ENCODE measurements at regions of chr14 and their contacts with region 1.

Region 1: GRCh38 chr14:63543000-63543825 is at the start of gene PPP2R5E:
- DNase-seq: peak; percentile 95 to 99
- H3K4me3 ChIP-seq: peak within 1 kb of the TSS; percentile 92
- H3K27ac ChIP-seq: peak within 1 kb of the TSS; percentile 87 to 91
- H3K4me1 ChIP-seq: peaks cover 0 to 16% of the 10 kb centered on the region in 2 donors
- H3K27me3 ChIP-seq: no peaks in the 10 kb centered on the region
- CTCF ChIP-seq: no peak
- total RNA-seq, gene PPP2R5E: 5.7 TPM

Region 2: GRCh38 chr14:63388763-63389431 is 154.3 kb before region 1 on chr14:
- intact Hi-C with region 1: loop called (anchors 1 kb)
- DNase-seq: no peak
- H3K4me3 ChIP-seq: no peak overlapping the region
- H3K27ac ChIP-seq: no peak overlapping the region
- H3K4me1 ChIP-seq: no peaks in the 10 kb centered on the region
- H3K27me3 ChIP-seq: no peaks in the 10 kb centered on the region
- CTCF ChIP-seq: peak; percentile 53 to 82 (median 79)

Region 3: DNA sequence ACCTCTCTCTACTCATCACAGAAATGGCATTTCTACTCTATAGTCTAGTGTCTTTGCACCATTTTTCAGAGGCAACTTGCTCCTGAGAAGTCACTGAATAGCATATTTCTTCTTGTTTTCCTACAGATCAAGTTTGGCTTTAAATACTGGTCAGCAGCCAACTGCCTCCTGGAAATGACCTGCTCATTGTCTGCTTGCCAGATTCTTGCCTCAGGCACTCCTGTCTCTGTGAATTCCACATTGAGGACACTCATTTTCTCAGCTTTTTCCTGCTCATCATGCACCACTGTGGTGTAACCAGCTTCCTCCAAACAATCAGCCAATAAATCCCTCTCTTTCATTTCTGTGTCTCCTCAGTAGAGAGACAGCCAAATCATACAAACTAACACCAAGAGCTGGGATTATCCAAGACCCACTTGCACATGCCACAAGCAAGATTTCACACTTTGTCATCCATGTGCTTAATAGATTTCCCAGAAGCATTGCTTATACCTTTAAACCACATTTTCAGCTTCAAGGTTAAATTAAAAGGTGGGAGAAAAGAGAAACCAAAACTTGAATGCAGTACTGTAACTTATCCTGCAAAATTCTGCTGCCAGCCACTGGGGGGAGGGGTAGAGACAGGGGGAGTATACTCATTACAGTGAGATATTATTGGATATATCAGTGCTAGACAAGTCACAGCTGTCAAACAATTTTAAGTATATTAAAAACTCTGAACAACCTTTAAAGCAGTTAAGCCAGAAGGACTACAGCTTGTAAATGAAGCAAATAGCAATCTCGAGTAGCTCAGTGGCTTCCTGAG is 105.1 kb before region 1 on chr14:
- intact Hi-C with region 1: loop called (anchors 2 kb)
- DNase-seq: peak in 1 of 2 donors; percentile 86
- H3K4me3 ChIP-seq: peak overlapping the region; percentile 20 to 27
- H3K27ac ChIP-seq: peak overlapping the region; percentile 51 to 67
- H3K4me1 ChIP-seq: peaks cover 9 to 41% of the 10 kb centered on the region in 2 donors
- H3K27me3 ChIP-seq: no peaks in the 10 kb centered on the region
- CTCF ChIP-seq: peak in 1 of 3 experiments; percentile 29

Region 4: GRCh38 chr14:63692310-63693020 is 149.3 kb after region 1 on chr14:
- intact Hi-C with region 1: no loop called
- DNase-seq: no peak
- H3K4me3 ChIP-seq: no peak overlapping the region
- H3K27ac ChIP-seq: no peak overlapping the region
- H3K4me1 ChIP-seq: no peaks in the 10 kb centered on the region
- H3K27me3 ChIP-seq: no peaks in the 10 kb centered on the region
- CTCF ChIP-seq: no peak

Region 5: DNA sequence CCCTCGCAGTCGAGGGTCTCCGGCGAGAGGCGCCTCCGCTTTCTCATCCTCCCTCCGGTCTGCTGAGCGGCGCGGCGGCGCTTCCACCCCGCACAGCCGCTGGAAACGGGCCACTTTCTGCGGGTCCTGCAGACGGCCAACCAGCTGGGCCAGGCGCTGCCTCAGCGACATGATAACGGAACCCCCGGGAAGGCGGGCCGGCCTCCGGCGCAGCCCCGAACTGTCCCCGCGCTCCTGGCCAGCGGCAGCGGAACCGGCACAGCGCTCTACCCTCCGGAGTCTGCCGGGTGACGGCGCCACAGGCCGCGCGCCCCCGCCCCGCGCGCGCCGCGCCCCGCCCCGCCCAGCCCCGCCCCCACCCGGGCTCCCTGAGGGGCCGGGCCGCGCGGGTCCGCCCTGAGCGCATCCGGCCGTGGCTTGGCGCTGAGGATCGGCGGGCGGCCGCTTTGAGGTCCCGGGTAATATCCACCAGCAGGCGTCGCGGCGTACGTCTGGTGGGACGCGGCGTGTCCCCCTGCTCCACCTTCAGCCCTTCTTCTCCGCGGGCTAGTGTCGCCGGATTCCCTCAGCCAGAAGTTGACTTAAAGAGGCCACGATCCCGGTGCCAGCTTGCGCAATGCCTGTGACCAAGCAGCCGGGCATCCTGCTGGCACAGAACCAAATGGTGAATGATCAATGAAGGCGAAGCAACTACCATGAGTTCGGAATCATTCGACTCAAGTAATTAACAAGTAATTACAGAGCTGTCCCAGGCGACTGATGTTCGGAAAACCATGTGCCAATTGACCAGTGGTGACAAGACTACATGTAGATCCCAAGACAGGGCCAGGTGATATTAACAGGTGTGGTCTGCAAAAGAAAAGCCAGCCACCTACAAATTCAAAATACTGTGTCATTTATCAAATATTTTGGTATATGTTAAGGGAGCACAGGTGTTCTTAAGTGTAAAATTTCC is 184.8 kb after region 1 on chr14 and contains the start of gene SGPP1:
- intact Hi-C with region 1: loop called (anchors 2 kb)
- DNase-seq: peak; percentile 22 to 89
- H3K4me3 ChIP-seq: peak within 1 kb of the TSS; percentile 96 to 100
- H3K27ac ChIP-seq: peak within 1 kb of the TSS; percentile 87 to 93
- H3K4me1 ChIP-seq: peaks cover 0 to 13% of the 10 kb centered on the region in 2 donors
- H3K27me3 ChIP-seq: no peaks in the 10 kb centered on the region
- CTCF ChIP-seq: peak; percentile 22 to 31 (median 25)
- total RNA-seq, gene SGPP1: 20.3 TPM

Measured in ascending aorta (tissue), 2 donors.